MCF 10A (cell line): ENCODE measurements at regions of chr6 and their contacts with region 1.

Region 1: GRCh38 chr6:26596579-26597388 is at the start of gene ABT1:
- DNase-seq: peak; percentile 99
- H3K4me3 Mint-ChIP-seq: no peak within 1 kb of the TSS
- H3K27ac Mint-ChIP-seq: no peak within 1 kb of the TSS
- H3K4me1 Mint-ChIP-seq: peaks cover 6% of the 10 kb centered on the region
- H3K27me3 Mint-ChIP-seq: no peaks in the 10 kb centered on the region
- CTCF ChIP-seq: no peak
- total RNA-seq, gene ABT1: 11.9 and 12.9 TPM in 2 replicates

Region 2: DNA sequence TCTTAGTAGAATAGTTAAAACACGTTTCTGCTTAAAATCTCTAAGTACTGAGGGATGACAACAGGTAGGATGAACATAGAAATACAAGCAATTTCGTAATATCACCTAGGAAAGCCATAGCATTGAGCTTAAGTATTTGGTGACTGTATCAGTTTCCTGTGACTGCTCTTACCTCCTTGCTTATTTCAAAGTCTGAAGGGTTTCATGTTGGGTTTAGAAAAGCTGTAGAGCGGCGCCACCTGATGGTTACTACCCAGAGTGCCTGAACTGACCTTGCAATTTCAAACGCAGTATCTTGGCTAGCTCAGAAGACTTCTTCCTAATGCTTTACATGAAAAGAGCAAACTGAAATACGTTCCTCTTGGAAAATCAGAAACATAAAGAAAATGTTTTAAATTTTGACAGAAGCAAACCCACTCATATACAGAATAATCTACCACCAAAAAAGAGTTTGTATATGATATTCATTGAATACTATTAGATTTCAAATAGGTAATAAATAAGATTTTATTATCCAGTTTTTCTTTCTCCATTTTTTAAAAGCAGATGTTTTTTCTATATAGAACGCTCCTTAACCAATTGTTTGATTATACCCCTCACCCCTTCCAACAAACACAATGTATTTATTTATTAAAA is 1578.7 kb before region 1 on chr6:
- CTCF ChIA-PET with region 1: no interaction called
- POLR2A ChIA-PET with region 1: no interaction called
- intact Hi-C with region 1: no loop called
- DNase-seq: peak; percentile 88
- H3K4me3 Mint-ChIP-seq: peak overlapping the region; percentile 22
- H3K27ac Mint-ChIP-seq: peak overlapping the region; percentile 62
- H3K4me1 Mint-ChIP-seq: peaks cover 38% of the 10 kb centered on the region
- H3K27me3 Mint-ChIP-seq: no peaks in the 10 kb centered on the region
- CTCF ChIP-seq: peak; percentile 87

Region 3: GRCh38 chr6:26576929-26577719 is 19.7 kb before region 1 on chr6:
- CTCF ChIA-PET with region 1: interaction called, 84 read pairs
- POLR2A ChIA-PET with region 1: interaction called, 31 read pairs
- intact Hi-C with region 1: loop called (anchors 1 kb)
- DNase-seq: peak; percentile 77
- H3K4me3 Mint-ChIP-seq: peak overlapping the region; percentile 74
- H3K27ac Mint-ChIP-seq: no peak overlapping the region
- H3K4me1 Mint-ChIP-seq: peaks cover 6% of the 10 kb centered on the region
- H3K27me3 Mint-ChIP-seq: peaks cover 2% of the 10 kb centered on the region
- CTCF ChIP-seq: no peak

Region 4: GRCh38 chr6:27078734-27079357 is 482.1 kb after region 1 on chr6:
- CTCF ChIA-PET with region 1: interaction called, 14 read pairs
- POLR2A ChIA-PET with region 1: no interaction called
- intact Hi-C with region 1: no loop called
- DNase-seq: peak; percentile 77
- H3K4me3 Mint-ChIP-seq: peak overlapping the region; percentile 69
- H3K27ac Mint-ChIP-seq: no peak overlapping the region
- H3K4me1 Mint-ChIP-seq: peaks cover 6% of the 10 kb centered on the region
- H3K27me3 Mint-ChIP-seq: peaks cover 24% of the 10 kb centered on the region
- CTCF ChIP-seq: peak; percentile 62